CD8-positive, alpha-beta T cell (primary cell): ENCODE measurements at regions of chr1 and their contacts with region 1.

Region 1: GRCh38 chr1:41573785-41574713 is 89.6 kb upstream of the EDN2 start:
- DNase-seq: peak; percentile 64 to 88 (median 81)
- ATAC-seq: peak; percentile 97
- H3K4me3 ChIP-seq: no peak overlapping the region
- H3K4me3 Mint-ChIP-seq: no peak overlapping the region
- H3K27ac ChIP-seq: no peak overlapping the region
- H3K27ac Mint-ChIP-seq: no peak overlapping the region
- H3K4me1 ChIP-seq: peaks cover 9% of the 10 kb centered on the region
- H3K4me1 Mint-ChIP-seq: peaks cover 8% of the 10 kb centered on the region
- H3K27me3 ChIP-seq: no peaks in the 10 kb centered on the region
- H3K27me3 Mint-ChIP-seq: no peaks in the 10 kb centered on the region
- CTCF ChIP-seq: peak; percentile 85

Region 2: GRCh38 chr1:41728403-41729202 is 154.6 kb after region 1 on chr1:
- CTCF ChIA-PET with region 1: interaction called, 12 read pairs
- POLR2A ChIA-PET with region 1: no interaction called
- intact Hi-C with region 1: no loop called
- DNase-seq: peak in 5 of 9 experiments; percentile 19 to 89 (median 61)
- ATAC-seq: peak; percentile 87
- H3K4me3 ChIP-seq: no peak overlapping the region
- H3K4me3 Mint-ChIP-seq: no peak overlapping the region
- H3K27ac ChIP-seq: no peak overlapping the region
- H3K27ac Mint-ChIP-seq: peak overlapping the region; percentile 72
- H3K4me1 ChIP-seq: peaks cover 29% of the 10 kb centered on the region
- H3K4me1 Mint-ChIP-seq: peaks cover 33% of the 10 kb centered on the region
- H3K27me3 ChIP-seq: no peaks in the 10 kb centered on the region
- H3K27me3 Mint-ChIP-seq: no peaks in the 10 kb centered on the region
- CTCF ChIP-seq: no peak

Region 3: GRCh38 chr1:41802532-41803501 is 228.8 kb after region 1 on chr1:
- CTCF ChIA-PET with region 1: interaction called, 12 read pairs
- POLR2A ChIA-PET with region 1: no interaction called
- intact Hi-C with region 1: no loop called
- DNase-seq: peak in 8 of 9 experiments; percentile 14 to 74 (median 42)
- ATAC-seq: peak; percentile 42
- H3K4me3 ChIP-seq: peak overlapping the region in 1 of 2 experiments; percentile 0
- H3K4me3 Mint-ChIP-seq: peak overlapping the region; percentile 61
- H3K27ac ChIP-seq: peak overlapping the region; percentile 26 to 75
- H3K27ac Mint-ChIP-seq: peak overlapping the region; percentile 94
- H3K4me1 ChIP-seq: peaks cover 81% of the 10 kb centered on the region
- H3K4me1 Mint-ChIP-seq: peaks cover 87% of the 10 kb centered on the region
- H3K27me3 ChIP-seq: no peaks in the 10 kb centered on the region
- H3K27me3 Mint-ChIP-seq: no peaks in the 10 kb centered on the region
- CTCF ChIP-seq: no peak

Region 4: DNA sequence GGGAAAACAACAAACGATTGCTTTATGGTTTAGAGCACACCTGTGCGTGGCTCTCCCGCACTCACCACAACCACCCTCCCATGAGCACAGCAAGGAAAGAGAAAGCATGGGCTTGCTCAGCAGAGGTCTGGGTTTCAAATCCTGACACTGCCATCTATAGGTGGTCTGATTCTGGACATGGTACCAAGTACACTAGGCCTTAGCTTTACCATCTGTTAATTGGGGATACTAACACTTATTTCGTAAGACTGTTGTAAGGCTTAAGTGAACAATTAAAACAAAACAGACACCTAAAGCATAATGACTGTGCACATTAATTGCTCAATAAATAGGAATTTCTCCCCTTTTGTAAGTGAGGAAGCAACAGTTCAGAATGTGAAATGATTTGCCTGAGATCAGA is 294.6 kb after region 1 on chr1:
- CTCF ChIA-PET with region 1: interaction called, 15 read pairs
- POLR2A ChIA-PET with region 1: no interaction called
- intact Hi-C with region 1: loop called (anchors 5 to 10 kb)
- DNase-seq: peak in 2 of 9 experiments; percentile 44 to 57
- ATAC-seq: no peak
- H3K4me3 ChIP-seq: no peak overlapping the region
- H3K4me3 Mint-ChIP-seq: no peak overlapping the region
- H3K27ac ChIP-seq: no peak overlapping the region
- H3K27ac Mint-ChIP-seq: no peak overlapping the region
- H3K4me1 ChIP-seq: no peaks in the 10 kb centered on the region
- H3K4me1 Mint-ChIP-seq: peaks cover 8% of the 10 kb centered on the region
- H3K27me3 ChIP-seq: no peaks in the 10 kb centered on the region
- H3K27me3 Mint-ChIP-seq: no peaks in the 10 kb centered on the region
- CTCF ChIP-seq: no peak

Region 5: GRCh38 chr1:41980827-41981653 is 407.0 kb after region 1 on chr1:
- CTCF ChIA-PET with region 1: interaction called, 3 read pairs
- POLR2A ChIA-PET with region 1: no interaction called
- intact Hi-C with region 1: loop called in 1 of 2 experiments (anchors 5 kb)
- DNase-seq: peak in 8 of 9 experiments; percentile 4 to 61 (median 22)
- ATAC-seq: peak; percentile 52
- H3K4me3 ChIP-seq: no peak overlapping the region
- H3K4me3 Mint-ChIP-seq: peak overlapping the region; percentile 22
- H3K27ac ChIP-seq: no peak overlapping the region
- H3K27ac Mint-ChIP-seq: peak overlapping the region; percentile 55
- H3K4me1 ChIP-seq: peaks cover 17% of the 10 kb centered on the region
- H3K4me1 Mint-ChIP-seq: peaks cover 24% of the 10 kb centered on the region
- H3K27me3 ChIP-seq: no peaks in the 10 kb centered on the region
- H3K27me3 Mint-ChIP-seq: no peaks in the 10 kb centered on the region
- CTCF ChIP-seq: no peak

Region 6: GRCh38 chr1:42747125-42747524 is 1173.1 kb after region 1 on chr1:
- CTCF ChIA-PET with region 1: no interaction called
- POLR2A ChIA-PET with region 1: no interaction called
- intact Hi-C with region 1: loop called in 1 of 2 experiments (anchors 10 kb)
- DNase-seq: peak; percentile 21 to 67 (median 47)
- ATAC-seq: peak; percentile 48
- H3K4me3 ChIP-seq: no peak overlapping the region
- H3K4me3 Mint-ChIP-seq: no peak overlapping the region
- H3K27ac ChIP-seq: no peak overlapping the region
- H3K27ac Mint-ChIP-seq: no peak overlapping the region
- H3K4me1 ChIP-seq: no peaks in the 10 kb centered on the region
- H3K4me1 Mint-ChIP-seq: no peaks in the 10 kb centered on the region
- H3K27me3 ChIP-seq: no peaks in the 10 kb centered on the region
- H3K27me3 Mint-ChIP-seq: no peaks in the 10 kb centered on the region
- CTCF ChIP-seq: peak; percentile 60